ENCODE measurements at regions of chr17 and their contacts with region 1.

Region 1: DNA sequence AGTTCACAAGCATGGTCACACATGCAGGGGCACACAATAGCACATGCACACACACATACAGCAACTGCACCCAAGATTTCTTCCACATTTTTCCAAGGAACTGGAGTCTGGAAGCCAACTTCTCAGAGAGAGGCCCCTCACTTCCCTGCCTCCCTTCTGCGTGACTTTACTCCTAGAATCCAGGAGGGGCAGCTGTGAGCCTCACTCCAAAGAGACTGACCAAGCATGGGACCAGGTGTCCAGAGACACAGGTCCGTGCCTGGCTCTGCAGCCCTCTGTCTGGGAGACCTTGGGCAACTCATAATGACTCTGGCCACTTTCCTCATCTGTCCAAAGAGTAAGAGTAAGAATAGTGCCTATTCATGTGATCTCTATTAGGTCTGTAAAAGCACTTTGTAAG is 104.7 kb upstream of the TMEM132E start:
- DNase-seq: no peak
- H3K4me3 ChIP-seq: no peak overlapping the region
- H3K27ac ChIP-seq: no peak overlapping the region
- H3K4me1 ChIP-seq: no peaks in the 10 kb centered on the region; a peak in 1 of 7 replicates
- H3K27me3 ChIP-seq: no peaks in the 10 kb centered on the region
- CTCF ChIP-seq: peak; percentile 41 to 49 (median 48)
- EP300 ChIP-seq: no peak
- POLR2A ChIP-seq: no peak
- RAD21 ChIP-seq: peak; percentile 25 to 48; a peak in 3 of 4 replicates

Region 2: GRCh38 chr17:34485999-34486398 is 11.3 kb after region 1 on chr17:
- CTCF ChIA-PET with region 1: interaction called, 18 read pairs
- POLR2A ChIA-PET with region 1: no interaction called
- DNase-seq: no peak
- H3K4me3 ChIP-seq: no peak overlapping the region
- H3K27ac ChIP-seq: no peak overlapping the region
- H3K4me1 ChIP-seq: peaks cover 0 to 2% (median 0%) of the 10 kb centered on the region in 4 experiments; a peak in 1 of 7 replicates
- H3K27me3 ChIP-seq: no peaks in the 10 kb centered on the region; a peak in 2 of 7 replicates
- CTCF ChIP-seq: no peak
- EP300 ChIP-seq: no peak
- POLR2A ChIP-seq: no peak
- RAD21 ChIP-seq: no peak

Region 3: DNA sequence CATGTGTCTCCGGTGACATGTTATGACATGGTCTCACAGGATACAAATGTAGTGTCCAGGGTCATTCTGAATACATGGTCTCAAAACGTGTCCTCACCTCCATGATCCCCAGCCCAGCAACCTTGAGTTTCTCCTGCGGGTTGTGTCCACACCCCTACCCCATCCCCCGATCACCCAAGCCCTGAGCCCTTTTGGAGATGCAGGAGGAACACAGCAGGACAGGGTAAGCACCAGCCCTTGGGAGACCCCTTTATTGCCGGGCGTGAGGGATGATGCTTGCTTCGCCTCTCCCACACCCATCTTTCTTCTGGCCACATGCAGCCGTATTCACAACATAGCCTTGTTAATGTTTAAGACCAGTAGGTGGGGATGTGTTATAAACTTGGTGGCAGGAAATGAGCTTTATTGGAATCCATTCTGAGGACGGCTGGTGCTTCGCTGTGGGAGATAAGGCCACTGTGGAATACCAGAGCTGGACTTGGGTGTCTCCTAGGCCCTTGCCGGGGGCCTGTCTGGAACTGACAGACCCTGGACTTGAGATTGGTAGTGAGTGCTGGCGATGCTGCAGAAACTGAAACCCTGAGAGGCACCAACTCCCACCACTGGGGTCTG is 110.2 kb after region 1 on chr17:
- CTCF ChIA-PET with region 1: no interaction called
- POLR2A ChIA-PET with region 1: no interaction called
- DNase-seq: no peak
- H3K4me3 ChIP-seq: no peak overlapping the region
- H3K27ac ChIP-seq: no peak overlapping the region
- H3K4me1 ChIP-seq: peaks cover 0 to 22% (median 11%) of the 10 kb centered on the region in 4 experiments; a peak in 5 of 7 replicates
- H3K27me3 ChIP-seq: peaks cover 66 to 96% (median 90%) of the 10 kb centered on the region in 4 experiments
- CTCF ChIP-seq: peak in 2 of 3 experiments; percentile 27 to 49; a peak in 3 of 4 replicates
- EP300 ChIP-seq: no peak
- POLR2A ChIP-seq: no peak
- RAD21 ChIP-seq: peak; percentile 52 to 65